Ascending aorta (tissue), 2 donors: ENCODE measurements at regions of chr17 and their contacts with region 1.

Region 1: GRCh38 chr17:29589524-29590410 is at the start of gene GIT1:
- DNase-seq: peak in 1 of 2 donors; percentile 92
- H3K4me3 ChIP-seq: peak within 1 kb of the TSS; percentile 84 to 97
- H3K27ac ChIP-seq: peak within 1 kb of the TSS; percentile 87 to 95
- H3K4me1 ChIP-seq: peaks cover 36 to 57% of the 10 kb centered on the region in 2 donors
- H3K27me3 ChIP-seq: no peaks in the 10 kb centered on the region
- CTCF ChIP-seq: peak in 1 of 3 experiments; percentile 7
- total RNA-seq, gene GIT1: 142 TPM

Region 2: GRCh38 chr17:29546085-29546484 is 43.7 kb before region 1 on chr17:
- intact Hi-C with region 1: no loop called
- DNase-seq: no peak
- H3K4me3 ChIP-seq: no peak overlapping the region
- H3K27ac ChIP-seq: no peak overlapping the region
- H3K4me1 ChIP-seq: no peaks in the 10 kb centered on the region
- H3K27me3 ChIP-seq: no peaks in the 10 kb centered on the region
- CTCF ChIP-seq: no peak

Region 3: DNA sequence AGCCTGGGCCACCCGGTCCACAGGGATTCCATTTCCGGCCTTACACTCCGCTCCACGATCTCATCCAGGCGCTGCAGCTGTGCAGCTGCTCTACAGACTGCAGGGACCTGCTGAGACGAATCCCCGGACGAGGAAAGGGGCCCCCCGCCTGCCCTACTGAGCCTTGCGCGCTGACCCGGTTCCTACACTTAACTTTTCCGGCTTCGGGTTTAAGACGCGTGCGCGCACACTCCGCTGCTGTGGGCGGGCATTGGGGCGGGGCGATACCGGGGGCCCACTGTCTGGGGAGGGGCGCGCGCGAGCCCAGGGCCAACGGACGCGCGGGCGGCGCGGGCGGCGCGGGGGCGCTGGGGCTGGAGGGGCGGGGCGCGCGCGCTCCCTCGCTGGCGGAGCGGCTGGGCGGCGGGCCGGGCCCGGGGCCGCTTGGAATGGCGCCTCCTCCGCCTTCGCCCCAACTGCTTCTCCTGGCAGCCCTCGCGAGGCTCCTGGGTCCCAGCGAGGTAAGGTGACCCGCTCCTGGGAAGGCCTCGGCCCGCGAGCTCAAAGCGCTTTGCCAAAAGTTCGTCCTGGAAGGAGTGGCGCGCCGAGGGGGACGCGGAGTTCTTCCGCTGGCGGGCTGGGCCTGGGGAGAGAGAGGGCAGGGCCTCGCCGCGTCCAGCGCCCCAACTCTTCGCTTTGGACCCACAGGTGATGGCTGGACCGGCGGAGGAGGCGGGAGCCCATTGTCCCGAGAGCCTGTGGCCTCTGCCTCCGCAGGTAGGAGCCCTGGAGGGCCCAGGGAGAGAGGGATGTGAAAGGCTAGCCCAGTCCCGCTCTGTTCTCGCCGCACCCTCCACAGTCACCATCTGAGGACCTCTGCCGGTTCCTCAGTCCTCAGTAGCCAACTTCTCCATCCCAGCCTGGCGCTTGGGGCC is 21.2 kb before region 1 on chr17 and contains the start of gene TP53I13:
- intact Hi-C with region 1: loop called (anchors 2 kb)
- DNase-seq: peak in 1 of 2 donors; percentile 91
- H3K4me3 ChIP-seq: peak within 1 kb of the TSS; percentile 83 to 95
- H3K27ac ChIP-seq: peak within 1 kb of the TSS; percentile 86 to 91
- H3K4me1 ChIP-seq: peaks cover 13 to 27% of the 10 kb centered on the region in 2 donors
- H3K27me3 ChIP-seq: no peaks in the 10 kb centered on the region
- CTCF ChIP-seq: no peak
- total RNA-seq, gene TP53I13: 93.7 TPM

Region 4: GRCh38 chr17:29617125-29617480 is 27.3 kb after region 1 on chr17:
- intact Hi-C with region 1: loop called (anchors 1 kb)
- DNase-seq: peak; percentile 54 to 90
- H3K4me3 ChIP-seq: peak overlapping the region; percentile 27 to 62
- H3K27ac ChIP-seq: no peak overlapping the region
- H3K4me1 ChIP-seq: peaks cover 18 to 38% of the 10 kb centered on the region in 2 donors
- H3K27me3 ChIP-seq: no peaks in the 10 kb centered on the region
- CTCF ChIP-seq: peak; percentile 64 to 72 (median 67)

Region 5: DNA sequence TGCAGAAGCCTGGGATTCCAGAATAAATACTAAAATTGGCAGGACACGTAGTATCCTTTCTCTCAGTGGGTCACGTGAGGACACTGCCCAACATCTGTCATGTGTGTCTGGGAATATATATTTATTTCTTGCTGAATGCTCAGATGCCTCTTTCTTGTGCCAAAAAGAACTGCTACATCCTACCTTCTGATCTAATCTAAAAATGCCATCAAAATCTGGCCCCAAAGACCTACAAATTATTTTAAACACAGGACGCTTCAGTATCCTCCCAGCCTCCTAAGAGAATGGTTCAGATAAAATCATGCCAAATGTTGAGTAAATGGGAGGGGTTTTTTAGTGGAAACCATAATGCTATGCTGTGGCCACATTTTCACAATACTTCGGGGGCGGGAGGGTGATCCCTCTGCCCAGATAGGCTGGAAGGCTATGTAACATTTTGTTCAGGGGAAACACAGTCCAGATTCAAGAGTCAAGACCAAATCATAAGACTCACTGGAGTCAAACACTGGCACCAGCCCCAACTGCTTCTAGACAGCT is 55.8 kb after region 1 on chr17:
- intact Hi-C with region 1: loop called (anchors 2 kb)
- DNase-seq: peak; percentile 54 to 89
- H3K4me3 ChIP-seq: no peak overlapping the region
- H3K27ac ChIP-seq: peak overlapping the region; percentile 69 to 84
- H3K4me1 ChIP-seq: peaks cover 12 to 32% of the 10 kb centered on the region in 2 donors
- H3K27me3 ChIP-seq: no peaks in the 10 kb centered on the region
- CTCF ChIP-seq: no peak

Region 6: DNA sequence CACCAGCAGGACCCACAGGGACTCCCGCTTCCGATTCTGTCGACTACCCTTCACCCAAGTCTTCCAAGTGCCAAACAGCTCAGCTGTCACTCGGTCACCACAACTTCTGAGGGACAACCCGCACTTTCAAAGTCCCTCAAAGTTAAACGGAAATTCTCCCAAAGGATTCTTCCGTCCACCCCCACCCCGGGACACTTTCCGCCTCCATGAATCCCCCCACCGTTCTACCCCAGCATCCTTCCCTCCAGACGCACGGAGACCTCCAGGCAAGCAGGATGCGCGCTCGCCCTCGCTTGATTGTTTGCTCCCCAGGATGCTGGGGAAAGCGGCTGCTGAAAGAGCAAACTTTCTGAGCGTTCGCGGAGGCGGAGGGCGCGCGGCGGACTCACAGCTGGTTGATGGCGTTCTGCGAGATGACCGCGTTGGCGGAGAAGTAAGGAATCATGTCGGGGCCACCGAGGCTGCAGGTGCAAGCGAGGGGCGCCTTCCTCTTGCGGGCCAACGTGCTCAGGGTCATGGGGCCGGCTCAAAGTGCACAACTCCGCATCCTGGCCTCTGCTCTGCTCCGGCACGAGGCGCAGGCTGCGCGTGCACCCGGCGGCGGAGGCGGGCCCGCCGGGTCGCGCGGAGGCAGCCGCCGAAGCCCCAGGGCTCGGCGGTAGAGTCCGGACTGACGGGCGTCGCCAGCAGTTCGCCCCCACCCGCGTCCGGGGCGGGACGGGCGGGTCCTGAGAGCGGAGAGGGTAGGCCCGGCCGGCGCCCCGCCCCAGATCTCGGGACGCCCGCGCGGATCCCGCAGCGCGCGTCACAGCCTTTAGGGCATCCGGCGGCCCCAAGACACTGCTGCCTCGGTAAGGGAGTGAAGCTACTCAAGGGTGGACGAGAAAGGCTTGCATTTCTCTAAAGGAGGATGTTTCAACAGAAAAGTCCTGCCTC is 171.3 kb after region 1 on chr17:
- intact Hi-C with region 1: loop called (anchors 5 kb)
- DNase-seq: peak; percentile 73 to 95
- H3K4me3 ChIP-seq: peak overlapping the region; percentile 82 to 88
- H3K27ac ChIP-seq: peak overlapping the region; percentile 63 to 74
- H3K4me1 ChIP-seq: no peaks in the 10 kb centered on the region
- H3K27me3 ChIP-seq: no peaks in the 10 kb centered on the region
- CTCF ChIP-seq: no peak